ENCODE measurements at regions of chr15 and their contacts with region 1.

Region 1: GRCh38 chr15:69160141-69160993 is at the start of gene GLCE:
- DNase-seq: peak; percentile 95
- ATAC-seq: peak; percentile 98
- H3K4me3 ChIP-seq: peak within 1 kb of the TSS; percentile 84
- H3K27ac ChIP-seq: peak within 1 kb of the TSS; percentile 87
- H3K4me1 ChIP-seq: peaks cover 2% of the 10 kb centered on the region; the same call in 1 of the 2 replicates
- H3K27me3 ChIP-seq: no peaks in the 10 kb centered on the region
- CTCF ChIP-seq: no peak
- POLR2A ChIP-seq: peak; percentile 92
- RAD21 ChIP-seq: peak; percentile 19; the same call in 1 of the 2 replicates
- total RNA-seq, gene GLCE: 29.6 and 38.0 TPM in 2 replicates

Region 2: DNA sequence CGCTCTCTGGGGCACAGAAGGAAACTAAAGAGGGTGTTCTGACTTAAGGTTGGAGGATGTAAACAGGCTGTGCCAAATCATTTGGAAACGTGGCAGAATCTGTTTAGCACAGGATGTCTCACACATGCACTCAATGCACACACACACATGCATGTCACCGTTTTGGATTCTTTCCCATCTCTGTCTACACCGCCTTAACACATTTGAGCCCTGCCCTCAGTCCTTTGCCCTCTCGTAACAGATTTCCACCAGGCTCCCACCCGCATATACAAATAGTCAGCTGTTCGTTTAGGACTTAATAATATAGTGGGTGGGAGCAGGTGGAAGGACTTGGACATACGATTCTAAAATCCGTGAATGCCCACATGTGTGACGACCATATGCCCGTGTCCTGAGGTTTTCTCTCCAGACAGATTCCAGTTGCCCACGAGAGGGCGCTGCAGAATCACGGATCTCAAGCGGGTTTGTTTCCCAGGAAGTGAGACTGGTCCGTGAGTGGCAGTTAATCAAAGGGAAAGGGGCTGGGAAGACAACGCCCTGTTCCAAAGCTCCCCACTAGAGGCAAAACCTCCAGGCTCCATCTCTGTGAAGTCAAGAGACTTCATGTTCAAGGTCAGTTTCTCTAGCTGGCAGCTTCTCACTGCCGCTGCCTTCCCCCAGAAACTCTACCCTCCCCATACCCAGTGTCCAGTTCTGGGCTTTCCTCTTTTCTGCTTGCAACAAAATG is 101.4 kb before region 1 on chr15:
- CTCF ChIA-PET with region 1: no interaction called
- POLR2A ChIA-PET with region 1: no interaction called
- dilution Hi-C with region 1: no loop called
- in situ Hi-C with region 1: no loop called
- intact Hi-C with region 1: loop called (anchors 2 kb)
- DNase-seq: peak; percentile 81
- ATAC-seq: peak; percentile 92
- H3K4me3 ChIP-seq: no peak overlapping the region
- H3K27ac ChIP-seq: no peak overlapping the region
- H3K4me1 ChIP-seq: no peaks in the 10 kb centered on the region; the same call in 1 of the 2 replicates
- H3K27me3 ChIP-seq: peaks cover 29% of the 10 kb centered on the region
- CTCF ChIP-seq: peak; percentile 88
- POLR2A ChIP-seq: peak; percentile 37
- RAD21 ChIP-seq: peak; percentile 98

Region 3: DNA sequence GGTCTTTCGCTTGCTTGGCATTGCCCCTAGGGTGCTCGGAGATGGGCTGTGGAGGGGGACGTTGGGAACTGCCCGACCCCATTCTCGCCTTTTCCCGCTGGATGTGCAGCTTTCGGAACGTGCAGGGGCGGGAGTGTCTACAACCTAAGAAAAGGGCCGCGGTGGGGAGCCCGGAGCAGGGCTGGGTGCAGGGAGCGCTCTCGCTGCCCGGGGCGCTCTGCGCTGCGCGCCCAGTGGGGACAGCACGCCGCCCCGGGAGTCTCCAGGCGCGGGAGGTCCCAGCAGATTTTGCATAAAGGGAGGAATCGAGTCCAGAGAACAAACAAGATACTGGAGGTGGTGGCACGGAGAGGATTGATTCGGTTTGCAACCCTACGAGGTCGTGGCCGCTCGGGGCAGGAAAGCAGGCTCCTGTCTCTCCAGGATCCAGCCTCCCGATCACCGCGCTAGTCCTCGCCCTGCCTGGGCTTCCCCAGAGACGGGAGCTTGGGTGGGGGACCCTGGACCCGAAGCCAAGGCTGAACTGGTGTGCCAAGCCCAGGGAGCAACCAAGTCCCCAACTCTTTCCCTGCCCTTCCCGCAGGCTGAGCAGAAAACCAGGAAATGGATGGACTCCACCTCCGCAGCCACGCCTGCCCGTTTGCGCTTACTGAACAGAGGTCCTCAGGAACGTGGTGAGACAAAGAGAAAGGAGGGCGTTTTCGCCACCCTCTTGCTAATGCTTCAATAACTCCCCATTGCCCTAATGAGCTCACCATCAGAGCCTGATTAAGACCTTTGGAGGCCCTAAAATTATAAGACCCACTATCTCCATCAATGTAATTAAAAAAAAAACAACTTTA is 86.1 kb before region 1 on chr15:
- CTCF ChIA-PET with region 1: no interaction called
- POLR2A ChIA-PET with region 1: no interaction called
- dilution Hi-C with region 1: no loop called
- in situ Hi-C with region 1: no loop called
- intact Hi-C with region 1: loop called (anchors 2 kb)
- DNase-seq: peak; percentile 54
- ATAC-seq: peak; percentile 95
- H3K4me3 ChIP-seq: peak overlapping the region; percentile 75
- H3K27ac ChIP-seq: peak overlapping the region; percentile 57
- H3K4me1 ChIP-seq: peaks cover 4% of the 10 kb centered on the region; the same call in 1 of the 2 replicates
- H3K27me3 ChIP-seq: peaks cover 6% of the 10 kb centered on the region
- CTCF ChIP-seq: peak; percentile 11; the same call in 1 of the 2 replicates
- POLR2A ChIP-seq: no peak
- RAD21 ChIP-seq: no peak; the same call in 1 of the 2 replicates

Region 4: GRCh38 chr15:69213786-69214185 is 53.4 kb after region 1 on chr15:
- CTCF ChIA-PET with region 1: interaction called, 3 read pairs
- POLR2A ChIA-PET with region 1: no interaction called
- dilution Hi-C with region 1: no loop called
- in situ Hi-C with region 1: no loop called
- intact Hi-C with region 1: loop called (anchors 5 kb)
- DNase-seq: no peak
- ATAC-seq: no peak
- H3K4me3 ChIP-seq: no peak overlapping the region
- H3K27ac ChIP-seq: no peak overlapping the region
- H3K4me1 ChIP-seq: no peaks in the 10 kb centered on the region
- H3K27me3 ChIP-seq: no peaks in the 10 kb centered on the region
- CTCF ChIP-seq: no peak
- POLR2A ChIP-seq: no peak
- RAD21 ChIP-seq: no peak

Region 5: DNA sequence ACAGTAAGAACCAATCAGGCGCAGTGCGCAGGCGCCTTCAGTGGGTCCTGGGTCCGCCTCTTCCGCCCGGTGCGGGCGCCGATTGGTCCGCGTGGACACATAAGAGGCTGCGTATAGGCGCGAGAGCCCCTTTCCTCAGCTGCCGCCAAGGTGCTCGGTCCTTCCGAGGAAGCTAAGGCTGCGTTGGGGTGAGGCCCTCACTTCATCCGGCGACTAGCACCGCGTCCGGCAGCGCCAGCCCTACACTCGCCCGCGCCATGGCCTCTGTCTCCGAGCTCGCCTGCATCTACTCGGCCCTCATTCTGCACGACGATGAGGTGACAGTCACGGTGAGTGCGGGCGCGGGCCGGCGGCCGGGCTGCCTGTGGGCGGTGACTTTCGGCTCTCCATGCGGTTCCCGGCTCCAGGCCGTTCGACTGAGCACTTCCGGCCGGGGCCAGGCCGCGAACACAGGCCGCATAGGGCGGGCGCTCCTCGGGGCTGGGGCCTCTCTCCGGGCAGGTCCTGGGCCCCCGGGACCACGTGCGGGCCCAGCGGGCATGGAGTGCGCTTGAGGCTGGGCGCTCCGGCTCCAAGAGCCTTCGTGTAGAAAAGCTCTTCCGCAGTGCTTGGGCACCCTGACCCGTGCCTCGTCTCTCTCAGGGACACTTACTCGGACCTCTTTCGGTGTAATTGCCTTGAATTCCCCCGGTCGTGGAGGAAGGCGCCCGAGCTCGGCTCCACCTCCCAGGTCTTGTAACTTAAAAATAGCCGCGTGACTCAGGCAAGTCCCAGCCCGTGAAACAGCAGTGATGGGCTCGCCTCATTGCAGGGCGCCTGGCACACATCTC is 292.5 kb after region 1 on chr15 and contains the start of gene RPLP1:
- CTCF ChIA-PET with region 1: no interaction called
- POLR2A ChIA-PET with region 1: no interaction called
- dilution Hi-C with region 1: no loop called
- in situ Hi-C with region 1: no loop called
- intact Hi-C with region 1: loop called (anchors 10 kb)
- DNase-seq: peak; percentile 94
- ATAC-seq: peak; percentile 93
- H3K4me3 ChIP-seq: peak within 1 kb of the TSS; percentile 70
- H3K27ac ChIP-seq: peak within 1 kb of the TSS; percentile 80
- H3K4me1 ChIP-seq: peaks cover 13% of the 10 kb centered on the region
- H3K27me3 ChIP-seq: no peaks in the 10 kb centered on the region
- CTCF ChIP-seq: no peak
- POLR2A ChIP-seq: peak; percentile 99
- RAD21 ChIP-seq: no peak
- total RNA-seq, gene RPLP1: 97.0 and 132 TPM in 2 replicates